SK-N-SH (cell line): ENCODE measurements at regions of chr4 and their contacts with region 1.

Region 1: DNA sequence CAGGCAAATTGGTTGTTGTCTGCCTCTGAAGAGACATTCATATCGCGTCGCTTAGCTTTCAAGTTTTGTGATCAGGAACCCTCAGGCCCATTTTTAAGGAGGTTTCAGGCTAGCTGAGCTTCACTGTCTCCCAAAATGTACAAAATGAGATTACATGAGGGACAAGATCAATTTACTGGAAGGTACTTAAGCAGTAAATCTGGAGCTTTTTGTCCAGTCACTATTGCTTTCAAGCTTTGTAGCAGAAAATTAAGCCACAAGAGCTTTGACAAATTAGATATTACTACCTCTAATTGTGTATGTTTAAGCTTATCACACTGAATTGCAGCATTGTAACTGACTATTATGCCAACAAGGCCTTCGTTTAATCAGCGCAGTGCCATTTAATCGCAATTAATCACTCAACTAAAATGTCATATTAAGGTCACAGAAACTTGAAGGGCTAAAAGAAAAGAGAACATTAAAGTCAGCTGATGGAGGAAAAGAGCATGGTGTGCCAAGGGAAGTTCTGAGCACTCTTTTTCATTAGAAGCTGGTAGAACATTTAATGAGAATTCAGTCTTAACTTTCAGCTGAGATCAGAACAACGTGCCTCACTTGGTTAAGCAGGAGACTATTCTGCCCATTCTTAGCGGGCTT is 353.0 kb downstream of the FBXO8 start:
- DNase-seq: peak; percentile 49
- H3K4me3 ChIP-seq: no peak overlapping the region
- H3K27ac ChIP-seq: peak overlapping the region; percentile 28 to 100; a peak in 3 of 4 replicates
- H3K4me1 ChIP-seq: peaks cover 22 to 62% of the 10 kb centered on the region in 2 experiments; a peak in 3 of 4 replicates
- H3K27me3 ChIP-seq: no peaks in the 10 kb centered on the region
- CTCF ChIP-seq: no peak
- EP300 ChIP-seq: peak; percentile 40 to 97
- RAD21 ChIP-seq: peak; percentile 12

Region 2: DNA sequence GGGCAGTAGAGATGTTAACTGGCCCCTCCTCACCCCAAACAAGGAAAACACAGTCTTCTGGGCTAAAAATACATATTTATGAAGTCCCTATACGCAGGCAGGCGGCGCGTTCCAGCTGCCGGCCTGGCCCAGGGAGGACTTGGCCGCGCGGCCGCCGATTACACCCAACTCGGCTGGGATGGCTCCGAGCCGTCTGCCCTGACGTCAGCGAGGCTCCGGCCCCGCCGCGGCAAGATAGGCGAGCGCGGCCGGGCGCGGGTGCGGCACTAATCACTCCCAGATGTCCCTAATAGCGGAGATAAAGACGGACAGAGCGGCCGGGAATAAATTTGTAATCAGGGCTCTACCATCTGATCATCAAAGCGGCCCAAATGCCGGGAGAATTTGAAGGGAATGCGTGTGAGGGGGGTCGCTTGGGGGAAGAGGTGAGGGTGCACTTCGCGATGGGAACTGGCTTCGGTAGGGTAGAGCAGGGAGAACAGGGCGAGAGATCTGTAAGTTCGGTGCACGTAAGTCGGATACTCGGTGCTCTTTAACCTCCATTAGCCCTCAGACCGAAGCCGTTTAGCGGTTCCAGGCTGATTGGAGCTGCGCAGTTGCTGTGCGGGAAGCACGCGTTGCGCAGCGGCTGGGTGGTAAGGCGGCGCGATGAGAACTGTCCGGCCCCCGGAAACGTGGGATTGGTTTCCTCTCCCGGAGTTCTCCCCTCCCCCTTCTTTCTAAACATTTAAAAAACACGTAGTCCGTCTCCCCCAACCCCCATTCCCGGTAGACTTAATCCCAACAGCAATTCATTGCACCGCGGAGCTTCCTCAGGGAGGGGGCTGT is 408.1 kb before region 1 on chr4:
- CTCF ChIA-PET with region 1: interaction called, 5 read pairs
- POLR2A ChIA-PET with region 1: interaction called, 101 read pairs
- DNase-seq: peak; percentile 73
- H3K4me3 ChIP-seq: peak overlapping the region; percentile 61 to 92
- H3K27ac ChIP-seq: peak overlapping the region; percentile 99
- H3K4me1 ChIP-seq: peaks cover 23 to 30% of the 10 kb centered on the region in 2 experiments
- H3K27me3 ChIP-seq: no peaks in the 10 kb centered on the region
- CTCF ChIP-seq: peak; percentile 22
- EP300 ChIP-seq: peak in 1 of 2 experiments; percentile 82; a peak in 2 of 4 replicates
- RAD21 ChIP-seq: no peak

Region 3: GRCh38 chr4:173538148-173538908 is 392.1 kb before region 1 on chr4:
- CTCF ChIA-PET with region 1: interaction called, 9 read pairs
- POLR2A ChIA-PET with region 1: interaction called, 101 read pairs
- DNase-seq: peak; percentile 68
- H3K4me3 ChIP-seq: peak overlapping the region; percentile 61 to 62
- H3K27ac ChIP-seq: peak overlapping the region; percentile 91 to 99
- H3K4me1 ChIP-seq: peaks cover 12 to 34% of the 10 kb centered on the region in 2 experiments; a peak in 3 of 4 replicates
- H3K27me3 ChIP-seq: no peaks in the 10 kb centered on the region
- CTCF ChIP-seq: no peak
- EP300 ChIP-seq: no peak
- RAD21 ChIP-seq: no peak

Region 4: DNA sequence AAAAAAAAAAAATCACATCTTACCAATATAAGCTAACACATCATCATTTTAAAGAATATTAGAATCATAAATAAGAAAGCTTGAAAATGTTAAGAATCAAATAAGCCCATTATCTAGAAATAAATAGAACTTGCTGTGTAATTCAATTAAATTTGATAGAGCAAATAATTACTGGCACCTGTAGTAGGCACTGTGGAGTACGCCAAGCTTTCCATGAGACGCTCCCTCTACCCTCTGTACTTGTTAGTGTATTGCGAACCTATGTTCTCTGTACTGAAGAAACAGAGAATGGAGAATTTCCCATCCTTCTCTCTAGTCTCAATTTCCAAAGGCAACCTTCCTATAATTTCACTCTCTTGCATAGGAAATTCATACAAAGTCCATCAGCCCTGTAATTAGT is 338.7 kb before region 1 on chr4:
- CTCF ChIA-PET with region 1: no interaction called
- POLR2A ChIA-PET with region 1: no interaction called
- DNase-seq: no peak
- H3K4me3 ChIP-seq: no peak overlapping the region
- H3K27ac ChIP-seq: no peak overlapping the region
- H3K4me1 ChIP-seq: peaks cover 0 to 3% of the 10 kb centered on the region in 2 experiments; a peak in 3 of 4 replicates
- H3K27me3 ChIP-seq: no peaks in the 10 kb centered on the region
- CTCF ChIP-seq: no peak; the same call in 1 of the 2 replicates
- EP300 ChIP-seq: no peak
- RAD21 ChIP-seq: no peak

Region 5: DNA sequence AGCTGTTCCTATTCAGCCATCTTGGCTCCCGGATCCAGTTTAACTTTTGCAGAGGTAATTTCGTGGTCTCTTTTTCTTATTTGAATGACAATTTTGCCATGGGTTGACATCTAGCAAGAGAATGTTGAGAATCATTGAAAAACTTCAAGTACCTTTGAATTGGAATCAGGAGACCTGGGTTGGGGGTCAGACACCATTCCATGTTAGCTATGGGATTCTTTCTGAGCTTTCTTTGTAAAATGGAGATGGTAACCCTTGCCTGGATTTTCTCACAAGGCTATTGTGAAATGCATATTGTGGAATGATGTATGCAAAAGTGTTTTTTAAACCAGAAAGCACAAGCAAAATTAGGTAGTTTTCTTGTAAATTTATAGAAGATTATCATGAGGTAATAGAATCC is 321.3 kb before region 1 on chr4:
- CTCF ChIA-PET with region 1: no interaction called
- POLR2A ChIA-PET with region 1: no interaction called
- DNase-seq: no peak
- H3K4me3 ChIP-seq: no peak overlapping the region
- H3K27ac ChIP-seq: no peak overlapping the region
- H3K4me1 ChIP-seq: no peaks in the 10 kb centered on the region
- H3K27me3 ChIP-seq: no peaks in the 10 kb centered on the region
- CTCF ChIP-seq: no peak
- EP300 ChIP-seq: no peak
- RAD21 ChIP-seq: no peak

Region 6: DNA sequence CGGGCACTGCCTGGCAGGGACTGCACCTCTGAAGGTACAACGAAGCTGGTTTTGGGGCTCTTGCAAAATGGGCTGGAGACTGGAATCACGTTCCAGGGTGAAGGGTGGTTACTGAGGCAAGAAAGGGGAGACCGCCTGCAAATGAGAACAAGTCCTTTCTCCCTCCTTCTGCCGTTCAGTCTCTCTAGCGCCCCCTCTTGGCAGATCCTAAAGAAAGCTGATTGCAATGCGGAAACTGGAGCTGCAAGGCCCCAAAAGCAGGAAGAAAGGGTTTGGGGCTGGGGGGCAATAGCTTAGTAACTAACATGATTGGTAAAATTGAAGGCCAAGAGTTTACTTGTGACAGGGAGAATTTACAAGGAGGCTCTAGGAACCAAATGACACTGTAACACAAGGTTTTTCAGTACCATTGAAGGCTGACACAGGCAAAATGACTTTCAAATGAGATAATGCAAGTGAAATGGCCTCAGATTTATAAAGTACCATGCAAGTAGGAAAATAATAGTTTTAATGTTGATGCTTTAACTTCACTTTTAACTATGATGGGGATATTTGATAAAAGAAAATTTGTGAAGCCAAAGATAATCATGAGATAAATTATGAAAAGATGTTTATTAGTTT is 177.7 kb before region 1 on chr4:
- CTCF ChIA-PET with region 1: interaction called, 11 read pairs
- POLR2A ChIA-PET with region 1: interaction called, 9 read pairs
- DNase-seq: no peak
- H3K4me3 ChIP-seq: no peak overlapping the region
- H3K27ac ChIP-seq: peak overlapping the region in 1 of 2 experiments; percentile 94; a peak in 2 of 4 replicates
- H3K4me1 ChIP-seq: peaks cover 0 to 13% of the 10 kb centered on the region in 2 experiments; a peak in 2 of 4 replicates
- H3K27me3 ChIP-seq: no peaks in the 10 kb centered on the region
- CTCF ChIP-seq: peak; percentile 59
- EP300 ChIP-seq: no peak
- RAD21 ChIP-seq: peak; percentile 32

Region 7: DNA sequence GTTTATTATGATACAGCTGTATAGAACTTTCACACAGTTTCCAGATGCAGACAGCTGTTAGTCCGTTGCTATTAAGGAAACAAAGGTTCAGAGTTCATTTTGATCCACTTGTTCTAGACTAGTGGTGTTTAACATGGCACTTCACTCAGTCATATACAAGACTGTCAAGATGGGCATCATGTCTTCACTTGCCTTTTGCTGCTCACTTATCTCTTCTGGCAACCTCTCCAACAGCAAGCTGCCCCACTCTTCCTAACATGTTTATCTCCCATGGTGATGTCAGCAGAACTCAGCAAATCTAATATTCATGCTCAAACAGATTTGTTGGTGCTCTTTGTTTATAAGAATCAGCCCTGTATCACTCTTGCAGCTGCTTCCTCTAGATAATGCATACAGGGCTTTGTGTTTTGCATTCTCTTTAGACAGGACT is 164.3 kb before region 1 on chr4:
- CTCF ChIA-PET with region 1: interaction called, 13 read pairs
- POLR2A ChIA-PET with region 1: interaction called, 29 read pairs
- DNase-seq: peak; percentile 67
- H3K4me3 ChIP-seq: no peak overlapping the region
- H3K27ac ChIP-seq: peak overlapping the region in 1 of 2 experiments; percentile 100; a peak in 2 of 4 replicates
- H3K4me1 ChIP-seq: peaks cover 0 to 45% of the 10 kb centered on the region in 2 experiments; a peak in 2 of 4 replicates
- H3K27me3 ChIP-seq: no peaks in the 10 kb centered on the region
- CTCF ChIP-seq: no peak
- EP300 ChIP-seq: peak; percentile 29 to 100; a peak in 2 of 4 replicates
- RAD21 ChIP-seq: peak; percentile 53

Region 8: DNA sequence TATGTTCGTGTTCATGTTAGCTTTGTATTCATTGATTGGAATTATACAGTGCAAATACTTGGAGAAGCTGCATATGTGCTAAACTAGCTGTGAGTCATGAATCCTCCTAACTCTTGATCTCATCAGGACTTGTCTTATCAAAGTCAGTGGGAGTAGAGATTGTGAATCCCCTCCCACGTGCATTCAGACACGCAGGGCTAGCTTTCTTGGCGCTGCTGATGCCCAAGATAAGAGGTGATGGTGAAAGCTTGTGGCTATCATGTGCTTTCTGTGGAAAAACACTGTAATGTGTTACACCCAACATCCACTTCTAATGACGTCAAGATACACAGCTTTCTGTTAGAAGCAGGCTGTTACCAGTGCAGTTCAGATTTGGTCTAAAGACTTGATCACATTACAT is 51.7 kb before region 1 on chr4:
- CTCF ChIA-PET with region 1: no interaction called
- POLR2A ChIA-PET with region 1: interaction called, 13 read pairs
- DNase-seq: peak; percentile 30
- H3K4me3 ChIP-seq: no peak overlapping the region
- H3K27ac ChIP-seq: peak overlapping the region in 1 of 2 experiments; percentile 84; a peak in 2 of 4 replicates
- H3K4me1 ChIP-seq: peaks cover 5 to 7% of the 10 kb centered on the region in 2 experiments; a peak in 3 of 4 replicates
- H3K27me3 ChIP-seq: no peaks in the 10 kb centered on the region
- CTCF ChIP-seq: no peak
- EP300 ChIP-seq: peak in 1 of 2 experiments; percentile 85; a peak in 2 of 4 replicates
- RAD21 ChIP-seq: no peak; the same call in 1 of the 2 replicates

Region 9: GRCh38 chr4:174069848-174070330 is 139.4 kb after region 1 on chr4:
- CTCF ChIA-PET with region 1: interaction called, 3 read pairs
- POLR2A ChIA-PET with region 1: interaction called, 16 read pairs
- DNase-seq: peak; percentile 69
- H3K4me3 ChIP-seq: no peak overlapping the region
- H3K27ac ChIP-seq: peak overlapping the region in 1 of 2 experiments; percentile 100; a peak in 2 of 4 replicates
- H3K4me1 ChIP-seq: peaks cover 0 to 26% of the 10 kb centered on the region in 2 experiments; a peak in 2 of 4 replicates
- H3K27me3 ChIP-seq: no peaks in the 10 kb centered on the region
- CTCF ChIP-seq: no peak
- EP300 ChIP-seq: peak; percentile 82 to 100
- RAD21 ChIP-seq: peak; percentile 46